ENCODE measurements at regions of chr21 and their contacts with region 1.

Region 1: GRCh38 chr21:37700641-37701202 is 215.5 kb downstream of the KCNJ6 start:
- DNase-seq: peak; percentile 73
- ATAC-seq: peak; percentile 100
- H3K4me3 ChIP-seq: no peak overlapping the region
- H3K27ac ChIP-seq: no peak overlapping the region
- H3K4me1 ChIP-seq: no peaks in the 10 kb centered on the region
- H3K27me3 ChIP-seq: peaks cover 15% of the 10 kb centered on the region; the same call in 1 of the 2 replicates
- CTCF ChIP-seq: peak; percentile 34 to 80 (median 75); a peak in 4 of 6 replicates
- POLR2A ChIP-seq: no peak
- RAD21 ChIP-seq: peak; percentile 60

Region 2: DNA sequence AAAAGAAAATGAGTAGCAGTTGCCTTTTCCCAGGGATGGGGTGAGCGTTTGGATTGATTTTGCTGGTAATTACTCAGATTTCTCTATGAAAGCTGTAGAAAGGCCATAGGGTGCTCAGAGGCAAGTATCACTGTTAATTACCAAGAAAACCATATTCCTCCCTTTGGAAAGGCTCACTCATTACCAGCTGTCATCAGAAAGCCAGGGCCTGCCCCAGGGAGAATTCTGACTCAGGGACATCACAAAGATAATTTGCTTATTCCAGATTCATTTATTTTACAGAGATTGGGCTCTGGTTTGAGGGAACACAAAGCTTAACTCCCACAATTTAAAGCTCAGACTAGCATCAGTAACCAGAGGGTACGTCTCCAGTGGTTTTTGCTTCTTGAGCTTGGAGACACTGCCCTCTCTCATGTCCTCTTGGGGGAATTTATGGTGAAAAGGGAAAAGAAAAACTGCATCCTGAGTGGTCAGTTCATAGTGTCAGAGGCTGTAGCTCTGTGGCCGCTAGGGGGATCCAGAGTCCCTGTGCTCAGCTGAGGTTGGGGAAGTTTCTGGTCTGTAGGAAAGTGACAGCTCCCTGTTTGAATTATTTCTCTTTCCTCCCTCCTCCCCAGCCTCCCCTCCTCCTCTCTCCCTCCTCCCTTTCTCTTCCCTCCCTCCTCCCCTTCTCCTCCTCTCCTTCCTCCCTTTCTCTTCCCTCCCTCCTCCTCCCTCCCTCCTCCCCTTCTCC is 11.3 kb after region 1 on chr21:
- CTCF ChIA-PET with region 1: interaction called, 23 read pairs
- POLR2A ChIA-PET with region 1: no interaction called
- RAD21 ChIA-PET with region 1: no interaction called
- intact Hi-C with region 1: no loop called
- DNase-seq: peak; percentile 53
- ATAC-seq: peak; percentile 99
- H3K4me3 ChIP-seq: no peak overlapping the region
- H3K27ac ChIP-seq: no peak overlapping the region
- H3K4me1 ChIP-seq: no peaks in the 10 kb centered on the region
- H3K27me3 ChIP-seq: no peaks in the 10 kb centered on the region
- CTCF ChIP-seq: peak; percentile 32 to 96 (median 82); a peak in 5 of 6 replicates
- POLR2A ChIP-seq: no peak
- RAD21 ChIP-seq: peak; percentile 67